ENCODE measurements at regions of chr12 and their contacts with region 1.

Region 1: DNA sequence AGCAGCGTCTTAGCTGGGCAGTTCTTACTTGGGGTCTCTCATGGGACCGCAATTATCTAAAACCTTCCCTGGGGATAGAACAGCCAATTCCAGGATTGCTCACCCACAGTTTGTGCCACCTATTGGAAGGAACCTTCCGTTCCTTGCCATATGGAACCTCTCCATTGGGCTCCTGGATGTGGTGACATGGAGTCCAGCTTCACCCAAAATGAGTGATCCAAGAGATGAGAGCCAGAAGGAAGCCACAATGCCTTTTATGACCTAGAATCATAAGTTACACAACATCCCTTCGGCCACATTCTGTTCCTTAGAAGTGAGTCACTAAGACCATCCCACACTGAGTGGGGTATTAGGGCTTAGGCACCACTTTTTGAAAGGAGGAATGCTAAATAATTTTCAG is 164.4 kb downstream of the FBXL14 start:
- DNase-seq: no peak
- H3K4me3 ChIP-seq: no peak overlapping the region
- H3K27ac ChIP-seq: no peak overlapping the region
- H3K4me1 ChIP-seq: no peaks in the 10 kb centered on the region
- H3K27me3 ChIP-seq: no peaks in the 10 kb centered on the region
- CTCF ChIP-seq: no peak
- POLR2A ChIP-seq: no peak

Region 2: DNA sequence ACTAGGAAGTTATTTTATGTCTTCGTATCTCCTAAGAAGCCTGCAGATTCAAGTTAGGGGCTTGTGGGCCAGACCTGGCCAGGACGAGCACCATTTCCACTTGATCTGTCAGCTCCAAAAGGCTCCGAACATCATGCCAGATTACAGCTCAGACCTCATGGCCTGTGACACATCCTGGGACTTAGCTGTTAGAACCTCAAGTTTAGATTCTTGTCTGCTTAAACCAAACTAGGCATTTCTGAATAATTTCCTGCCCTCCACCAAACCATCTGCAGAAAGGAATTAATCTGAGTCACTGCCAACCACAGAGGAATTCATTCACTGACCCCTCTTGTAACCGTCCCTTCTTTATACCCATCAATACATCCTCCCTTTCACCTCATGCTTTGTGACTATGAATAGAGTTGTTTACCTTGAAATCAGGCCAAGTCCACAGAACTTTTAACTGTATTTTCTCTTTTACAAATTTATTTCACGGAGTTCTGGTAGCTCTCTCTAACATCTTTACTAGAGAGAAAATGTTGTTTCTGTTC is 44.1 kb after region 1 on chr12:
- intact Hi-C with region 1: loop called (anchors 10 kb)
- DNase-seq: no peak
- H3K4me3 ChIP-seq: no peak overlapping the region
- H3K27ac ChIP-seq: no peak overlapping the region
- H3K4me1 ChIP-seq: peaks cover 20% of the 10 kb centered on the region
- H3K27me3 ChIP-seq: no peaks in the 10 kb centered on the region
- CTCF ChIP-seq: no peak
- POLR2A ChIP-seq: no peak